ENCODE measurements at regions of chr4 and their contacts with region 1.

Region 1: GRCh38 chr4:89110986-89111832 is at the start of gene TIGD2:
- DNase-seq: peak; percentile 82
- ATAC-seq: peak; percentile 95
- H3K4me3 Mint-ChIP-seq: peak within 1 kb of the TSS; percentile 88
- H3K27ac Mint-ChIP-seq: peak within 1 kb of the TSS; percentile 77
- H3K4me1 Mint-ChIP-seq: peaks cover 30% of the 10 kb centered on the region
- H3K27me3 Mint-ChIP-seq: no peaks in the 10 kb centered on the region
- CTCF ChIP-seq: peak; percentile 96
- total RNA-seq, gene TIGD2: 7.0 and 8.2 TPM in 2 replicates

Region 2: DNA sequence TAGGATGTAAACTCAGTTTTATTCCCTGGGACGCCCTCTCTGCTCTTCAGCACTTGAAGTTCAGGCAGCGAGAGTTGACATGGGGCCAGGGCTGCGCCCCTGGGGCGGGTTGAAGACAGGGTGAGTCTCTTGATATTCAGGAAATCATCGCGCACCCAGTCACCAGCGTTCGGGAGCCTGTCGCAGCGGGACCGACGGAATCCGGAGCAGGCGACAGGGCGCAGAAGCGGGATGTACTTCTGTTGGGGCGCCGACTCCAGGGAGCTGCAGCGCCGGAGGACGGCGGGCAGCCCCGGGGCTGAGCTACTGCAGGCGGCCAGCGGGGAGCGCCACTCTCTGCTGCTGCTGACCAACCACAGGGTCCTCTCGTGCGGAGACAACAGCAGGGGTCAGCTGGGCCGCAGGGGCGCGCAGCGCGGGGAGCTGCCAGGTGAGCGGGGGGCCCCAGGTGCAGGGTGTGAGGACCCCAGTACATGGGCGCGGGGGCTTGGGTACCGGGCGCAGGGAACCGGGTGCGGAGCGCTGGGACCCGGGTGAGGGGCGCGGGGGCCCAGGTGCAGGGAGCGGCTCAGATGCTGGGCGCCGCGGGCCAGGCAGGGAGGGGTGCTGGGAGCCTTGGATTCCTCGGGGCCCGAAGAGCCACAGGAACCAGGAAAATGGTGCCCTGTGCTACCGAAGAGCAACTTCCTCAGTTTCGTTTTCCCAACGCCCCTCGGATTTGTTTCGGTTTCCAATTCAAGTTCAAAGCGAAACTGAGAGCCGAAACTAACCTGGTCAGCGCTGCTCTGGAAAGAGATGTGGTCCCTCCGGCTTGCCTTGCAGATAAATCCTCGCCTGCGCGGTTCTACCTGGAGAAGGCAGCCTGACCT is 732.3 kb before region 1 on chr4 and contains the start of gene HERC6:
- CTCF ChIA-PET with region 1: no interaction called
- POLR2A ChIA-PET with region 1: no interaction called
- intact Hi-C with region 1: loop called (anchors 5 kb)
- DNase-seq: peak; percentile 64
- ATAC-seq: peak; percentile 80
- H3K4me3 Mint-ChIP-seq: peak within 1 kb of the TSS; percentile 92
- H3K27ac Mint-ChIP-seq: peak within 1 kb of the TSS; percentile 91
- H3K4me1 Mint-ChIP-seq: peaks cover 31% of the 10 kb centered on the region
- H3K27me3 Mint-ChIP-seq: no peaks in the 10 kb centered on the region
- CTCF ChIP-seq: no peak
- total RNA-seq, gene HERC6: 11.4 and 12.2 TPM in 2 replicates

Region 3: DNA sequence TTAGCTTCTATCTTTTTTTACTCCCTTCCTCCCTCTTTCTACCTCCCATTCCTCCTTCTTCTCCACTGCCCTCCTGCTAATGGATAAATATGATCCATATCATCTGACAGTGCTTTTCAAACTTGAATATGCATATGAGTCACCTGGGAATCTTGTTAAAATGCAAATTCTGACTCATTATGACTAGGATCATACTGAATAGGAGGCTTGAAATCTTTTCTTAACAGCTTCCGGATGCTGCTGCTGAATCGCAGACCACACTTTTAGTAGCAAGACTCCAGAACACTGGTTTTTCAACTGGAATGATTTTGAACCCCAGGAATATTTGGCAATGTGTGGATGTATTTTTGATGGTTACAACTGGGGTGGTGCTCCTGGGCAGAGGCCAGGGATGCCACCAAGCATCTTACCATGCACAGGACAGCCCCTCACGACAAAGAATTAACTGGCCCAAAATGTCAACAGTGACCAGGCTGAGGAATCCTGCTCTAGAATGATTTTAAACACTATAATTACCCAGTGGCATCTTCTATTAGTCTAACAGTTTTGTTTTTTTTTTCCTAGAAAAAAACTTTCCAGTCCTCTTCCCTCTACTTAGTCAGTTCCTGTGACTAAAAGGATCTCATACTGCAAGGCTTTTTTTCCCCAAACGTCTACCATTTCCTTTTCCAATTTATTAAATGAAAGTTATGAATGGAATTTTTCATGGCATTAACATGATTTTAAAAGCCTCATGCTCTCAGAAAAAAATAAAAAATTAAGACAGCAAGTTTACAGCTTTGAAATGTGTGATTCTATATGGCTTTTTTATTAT is 577.1 kb before region 1 on chr4:
- CTCF ChIA-PET with region 1: no interaction called
- POLR2A ChIA-PET with region 1: no interaction called
- intact Hi-C with region 1: loop called (anchors 5 kb)
- DNase-seq: no peak
- ATAC-seq: no peak
- H3K4me3 Mint-ChIP-seq: no peak overlapping the region
- H3K27ac Mint-ChIP-seq: no peak overlapping the region
- H3K4me1 Mint-ChIP-seq: no peaks in the 10 kb centered on the region
- H3K27me3 Mint-ChIP-seq: no peaks in the 10 kb centered on the region
- CTCF ChIP-seq: no peak

Region 4: GRCh38 chr4:88823058-88823919 is 287.9 kb before region 1 on chr4:
- CTCF ChIA-PET with region 1: no interaction called
- POLR2A ChIA-PET with region 1: no interaction called
- intact Hi-C with region 1: loop called (anchors 2 kb)
- DNase-seq: no peak
- ATAC-seq: peak; percentile 82
- H3K4me3 Mint-ChIP-seq: peak overlapping the region; percentile 83
- H3K27ac Mint-ChIP-seq: peak overlapping the region; percentile 50
- H3K4me1 Mint-ChIP-seq: peaks cover 14% of the 10 kb centered on the region
- H3K27me3 Mint-ChIP-seq: no peaks in the 10 kb centered on the region
- CTCF ChIP-seq: no peak

Region 5: DNA sequence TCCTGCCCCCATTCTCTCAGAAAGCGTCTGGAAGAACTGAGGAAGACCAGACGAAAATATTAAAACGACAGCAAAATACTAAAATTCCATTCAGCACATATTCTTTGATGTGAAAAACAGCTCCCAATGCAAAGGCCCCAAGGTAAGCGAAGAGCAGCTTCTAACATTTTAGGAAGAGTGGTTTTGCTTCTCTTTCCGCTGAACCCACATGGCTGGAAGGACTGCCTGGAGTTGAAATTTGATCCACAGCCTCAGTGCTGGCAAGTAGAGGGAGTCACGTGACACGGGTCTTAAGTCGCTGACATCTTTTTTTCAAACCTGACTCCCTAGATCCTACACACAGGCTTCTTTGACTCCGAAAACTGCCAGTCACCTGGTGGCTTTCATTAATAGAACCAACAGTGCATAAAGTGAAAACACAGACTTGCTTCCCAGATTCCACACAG is 54.2 kb before region 1 on chr4 and contains the start of gene FAM13A:
- CTCF ChIA-PET with region 1: no interaction called
- POLR2A ChIA-PET with region 1: no interaction called
- intact Hi-C with region 1: loop called (anchors 5 kb)
- DNase-seq: no peak
- ATAC-seq: no peak
- H3K4me3 Mint-ChIP-seq: peak within 1 kb of the TSS; percentile 56
- H3K27ac Mint-ChIP-seq: no peak within 1 kb of the TSS
- H3K4me1 Mint-ChIP-seq: peaks cover 14% of the 10 kb centered on the region
- H3K27me3 Mint-ChIP-seq: no peaks in the 10 kb centered on the region
- CTCF ChIP-seq: no peak
- total RNA-seq, gene FAM13A: 2.4 and 2.7 TPM in 2 replicates

Region 6: DNA sequence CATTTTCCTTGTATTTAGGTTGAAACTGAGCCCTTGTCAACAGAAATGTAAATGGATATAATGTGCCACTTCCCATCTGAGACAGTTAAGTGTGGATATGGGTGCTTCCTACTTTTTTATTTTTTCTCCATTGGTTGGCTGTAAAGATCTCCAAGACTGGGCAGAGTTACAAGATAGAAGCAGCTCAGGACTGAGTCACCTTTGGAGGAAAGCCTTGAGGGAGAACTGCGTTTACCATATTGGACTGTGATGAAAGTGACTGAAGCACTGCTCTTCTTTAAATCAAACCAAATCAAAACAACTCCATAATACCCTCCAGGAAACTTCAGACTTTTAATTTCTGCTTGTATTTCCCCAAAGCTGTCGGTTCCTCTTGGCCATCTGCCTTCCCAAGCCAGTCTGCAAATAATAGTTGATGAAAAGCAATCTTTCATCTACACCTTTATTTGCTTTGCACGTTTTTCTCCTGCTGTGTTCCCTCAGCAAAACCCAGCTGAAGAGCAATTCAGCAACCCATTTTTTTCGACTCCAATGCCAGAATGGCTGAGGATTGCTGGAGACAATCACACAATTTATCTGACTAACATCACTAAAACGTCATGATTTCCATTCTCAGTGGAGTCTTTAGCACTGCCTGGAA is 102.0 kb after region 1 on chr4:
- CTCF ChIA-PET with region 1: no interaction called
- POLR2A ChIA-PET with region 1: no interaction called
- intact Hi-C with region 1: no loop called
- DNase-seq: no peak
- ATAC-seq: no peak
- H3K4me3 Mint-ChIP-seq: no peak overlapping the region
- H3K27ac Mint-ChIP-seq: no peak overlapping the region
- H3K4me1 Mint-ChIP-seq: peaks cover 10% of the 10 kb centered on the region
- H3K27me3 Mint-ChIP-seq: peaks cover 3% of the 10 kb centered on the region
- CTCF ChIP-seq: no peak

Measured in activated B cell treated with CpG ODN at 0.5 μM for 24 hours (primary cell).